T-cell (primary cell): ENCODE measurements at regions of chr13 and their contacts with region 1.

Region 1: GRCh38 chr13:97411984-97412383 is 22.0 kb upstream of the RAP2A start:
- DNase-seq: no peak
- ATAC-seq: no peak
- H3K4me3 ChIP-seq: no peak overlapping the region
- H3K4me3 Mint-ChIP-seq: no peak overlapping the region
- H3K27ac ChIP-seq: no peak overlapping the region
- H3K27ac Mint-ChIP-seq: no peak overlapping the region
- H3K4me1 ChIP-seq: no peaks in the 10 kb centered on the region
- H3K4me1 Mint-ChIP-seq: no peaks in the 10 kb centered on the region
- H3K27me3 ChIP-seq: no peaks in the 10 kb centered on the region
- H3K27me3 Mint-ChIP-seq: peaks cover 9 to 16% of the 10 kb centered on the region in 2 donors

Region 2: GRCh38 chr13:97397267-97397666 is 14.7 kb before region 1 on chr13:
- CTCF ChIA-PET with region 1: no interaction called
- POLR2A ChIA-PET with region 1: interaction called in 1 of 2 experiments, 10 read pairs
- DNase-seq: no peak
- ATAC-seq: no peak
- H3K4me3 ChIP-seq: no peak overlapping the region
- H3K4me3 Mint-ChIP-seq: no peak overlapping the region
- H3K27ac ChIP-seq: no peak overlapping the region
- H3K27ac Mint-ChIP-seq: no peak overlapping the region
- H3K4me1 ChIP-seq: no peaks in the 10 kb centered on the region
- H3K4me1 Mint-ChIP-seq: no peaks in the 10 kb centered on the region
- H3K27me3 ChIP-seq: no peaks in the 10 kb centered on the region
- H3K27me3 Mint-ChIP-seq: peaks cover 4 to 5% of the 10 kb centered on the region in 2 donors